ENCODE measurements at regions of chr2 and their contacts with region 1.

Region 1: GRCh38 chr2:229160180-229160579 is 110.9 kb downstream of the PID1 start:
- DNase-seq: peak; percentile 28
- H3K4me3 Mint-ChIP-seq: no peak overlapping the region
- H3K27ac Mint-ChIP-seq: peak overlapping the region; percentile 23
- H3K4me1 Mint-ChIP-seq: peaks cover 33% of the 10 kb centered on the region
- H3K27me3 Mint-ChIP-seq: no peaks in the 10 kb centered on the region
- CTCF ChIP-seq: no peak

Region 2: GRCh38 chr2:228768818-228769217 is 391.4 kb before region 1 on chr2:
- CTCF ChIA-PET with region 1: no interaction called
- POLR2A ChIA-PET with region 1: no interaction called
- intact Hi-C with region 1: no loop called
- DNase-seq: peak; percentile 73
- H3K4me3 Mint-ChIP-seq: no peak overlapping the region
- H3K27ac Mint-ChIP-seq: no peak overlapping the region
- H3K4me1 Mint-ChIP-seq: peaks cover 19% of the 10 kb centered on the region
- H3K27me3 Mint-ChIP-seq: no peaks in the 10 kb centered on the region
- CTCF ChIP-seq: no peak

Region 3: GRCh38 chr2:229133155-229133772 is 26.9 kb before region 1 on chr2:
- CTCF ChIA-PET with region 1: interaction called, 12 read pairs
- POLR2A ChIA-PET with region 1: interaction called, 3 read pairs
- intact Hi-C with region 1: no loop called
- DNase-seq: peak; percentile 76
- H3K4me3 Mint-ChIP-seq: no peak overlapping the region
- H3K27ac Mint-ChIP-seq: no peak overlapping the region
- H3K4me1 Mint-ChIP-seq: peaks cover 11% of the 10 kb centered on the region
- H3K27me3 Mint-ChIP-seq: no peaks in the 10 kb centered on the region
- CTCF ChIP-seq: peak; percentile 57